Activated CD4-positive, alpha-beta memory T cell treated with anti-CD3 and anti-CD28 coated beads, Interleukin-2, amount 10 ng/mL, durations not matched to agents 7 days and 5 days (primary cell): ENCODE measurements at regions of chr5 and their contacts with region 1.

Region 1: GRCh38 chr5:96662725-96663513 is 743 bp downstream of the CAST start:
- DNase-seq: peak; percentile 91
- H3K4me3 Mint-ChIP-seq: peak overlapping the region; percentile 99
- H3K27ac Mint-ChIP-seq: peak overlapping the region; percentile 99
- H3K4me1 Mint-ChIP-seq: peaks cover 46% of the 10 kb centered on the region
- H3K27me3 Mint-ChIP-seq: peaks cover 19% of the 10 kb centered on the region

Region 2: DNA sequence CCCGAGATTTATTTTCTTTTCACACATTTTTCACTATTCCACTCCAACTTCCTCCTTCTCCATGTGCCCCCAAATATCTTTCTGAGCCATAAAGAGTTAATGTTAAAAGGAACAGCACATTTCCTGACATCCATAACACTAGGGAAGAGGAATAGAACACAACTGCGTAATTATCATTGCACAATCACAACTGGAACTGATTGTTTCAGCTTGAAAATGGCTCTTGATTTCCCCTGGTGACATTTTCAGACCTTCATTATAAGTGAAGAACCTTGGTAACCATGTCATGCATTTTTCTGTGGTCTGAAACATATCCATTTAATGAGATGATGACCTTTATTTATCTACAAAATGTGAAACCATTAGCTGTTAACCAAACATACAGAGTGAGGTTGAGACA is 312.2 kb before region 1 on chr5:
- CTCF ChIA-PET with region 1: no interaction called
- POLR2A ChIA-PET with region 1: no interaction called
- DNase-seq: no peak
- H3K4me3 Mint-ChIP-seq: no peak overlapping the region
- H3K27ac Mint-ChIP-seq: no peak overlapping the region
- H3K4me1 Mint-ChIP-seq: peaks cover 4% of the 10 kb centered on the region
- H3K27me3 Mint-ChIP-seq: peaks cover 30% of the 10 kb centered on the region

Region 3: DNA sequence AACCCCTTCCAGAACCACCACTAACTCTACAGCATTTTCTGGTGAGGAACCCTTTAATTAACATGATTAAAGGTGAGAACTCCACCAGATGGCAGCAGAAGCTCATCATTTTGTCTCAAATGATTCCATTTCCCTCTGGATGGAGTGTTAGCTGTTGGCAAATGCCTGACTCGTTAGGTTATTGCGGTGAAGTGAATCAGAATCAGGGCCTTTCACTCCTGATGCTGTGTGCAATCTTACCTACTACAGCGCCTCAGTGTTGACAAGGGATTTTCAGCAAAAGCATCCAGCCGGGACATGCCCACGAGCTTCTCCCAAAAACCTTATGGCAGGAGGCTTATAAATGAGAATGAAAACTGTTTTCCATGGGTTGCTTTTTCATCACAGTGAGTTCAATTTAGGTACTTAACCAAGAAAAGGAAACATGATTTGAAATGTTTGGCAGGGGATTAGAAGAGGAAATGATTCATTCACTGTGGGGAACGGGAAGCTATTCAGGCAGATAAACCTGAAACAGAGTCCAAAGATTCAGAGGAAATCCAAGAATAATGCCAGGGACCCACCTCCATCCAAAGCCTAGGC is 48.7 kb before region 1 on chr5:
- CTCF ChIA-PET with region 1: interaction called, 9 read pairs
- POLR2A ChIA-PET with region 1: interaction called, 11 read pairs
- DNase-seq: peak; percentile 44
- H3K4me3 Mint-ChIP-seq: no peak overlapping the region
- H3K27ac Mint-ChIP-seq: no peak overlapping the region
- H3K4me1 Mint-ChIP-seq: peaks cover 7% of the 10 kb centered on the region
- H3K27me3 Mint-ChIP-seq: peaks cover 38% of the 10 kb centered on the region

Region 4: GRCh38 chr5:96633820-96634219 is 29.1 kb before region 1 on chr5:
- CTCF ChIA-PET with region 1: no interaction called
- POLR2A ChIA-PET with region 1: interaction called, 14 read pairs
- DNase-seq: no peak
- H3K4me3 Mint-ChIP-seq: no peak overlapping the region
- H3K27ac Mint-ChIP-seq: no peak overlapping the region
- H3K4me1 Mint-ChIP-seq: no peaks in the 10 kb centered on the region
- H3K27me3 Mint-ChIP-seq: peaks cover 28% of the 10 kb centered on the region

Region 5: DNA sequence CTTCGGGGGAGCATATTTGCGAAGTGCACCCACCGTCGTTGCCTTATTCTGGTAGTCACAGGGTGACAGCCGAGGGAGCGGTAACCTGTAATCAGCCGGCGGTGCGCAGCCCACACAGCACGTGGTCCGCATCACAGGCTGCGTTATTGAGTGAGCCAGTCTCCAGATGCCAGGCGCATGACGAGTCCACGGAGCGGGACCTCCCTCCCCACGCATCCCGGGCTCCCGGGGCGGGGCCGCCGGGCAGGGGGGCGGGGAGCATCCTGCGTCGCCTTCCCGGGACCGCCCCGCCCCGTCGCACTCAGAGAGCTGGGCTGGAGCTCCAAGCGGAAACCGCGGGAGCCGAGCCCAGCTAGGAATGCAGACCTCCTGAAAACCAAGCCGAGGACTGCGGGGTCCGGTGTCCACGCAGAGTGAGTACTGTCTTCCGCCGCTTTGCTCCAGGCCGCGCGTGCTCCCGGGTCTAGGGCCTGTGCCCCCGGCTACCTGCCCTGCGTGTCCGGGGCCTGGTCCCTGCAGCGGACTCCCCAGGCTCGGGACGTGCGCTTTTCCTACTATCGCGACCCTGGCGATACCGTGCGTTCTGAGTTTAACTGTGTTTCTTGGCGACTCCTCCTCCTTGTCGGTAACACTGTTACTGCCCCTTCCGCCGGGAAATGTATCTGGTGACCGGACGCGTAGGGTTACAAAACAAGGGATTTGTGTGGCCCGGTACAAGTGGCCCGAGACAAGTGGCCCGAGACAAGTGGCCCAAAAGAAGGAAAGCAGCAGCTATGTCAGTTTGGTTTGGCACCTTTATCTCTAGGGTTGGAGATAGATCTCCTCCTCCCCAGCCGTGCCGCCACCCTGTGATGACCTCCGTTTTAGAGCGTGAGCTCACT is 39.8 kb after region 1 on chr5:
- CTCF ChIA-PET with region 1: interaction called, 20 read pairs
- POLR2A ChIA-PET with region 1: interaction called, 62 read pairs
- DNase-seq: peak; percentile 75
- H3K4me3 Mint-ChIP-seq: peak overlapping the region; percentile 77
- H3K27ac Mint-ChIP-seq: peak overlapping the region; percentile 82
- H3K4me1 Mint-ChIP-seq: peaks cover 44% of the 10 kb centered on the region
- H3K27me3 Mint-ChIP-seq: no peaks in the 10 kb centered on the region

Region 6: GRCh38 chr5:96934708-96935558 is 272.0 kb after region 1 on chr5:
- CTCF ChIA-PET with region 1: no interaction called
- POLR2A ChIA-PET with region 1: interaction called, 16 read pairs
- DNase-seq: peak; percentile 97
- H3K4me3 Mint-ChIP-seq: peak overlapping the region; percentile 80
- H3K27ac Mint-ChIP-seq: peak overlapping the region; percentile 96
- H3K4me1 Mint-ChIP-seq: peaks cover 48% of the 10 kb centered on the region
- H3K27me3 Mint-ChIP-seq: no peaks in the 10 kb centered on the region